Endothelial cell of umbilical vein (primary cell): ENCODE measurements at regions of chr10 and their contacts with region 1.

Region 1: DNA sequence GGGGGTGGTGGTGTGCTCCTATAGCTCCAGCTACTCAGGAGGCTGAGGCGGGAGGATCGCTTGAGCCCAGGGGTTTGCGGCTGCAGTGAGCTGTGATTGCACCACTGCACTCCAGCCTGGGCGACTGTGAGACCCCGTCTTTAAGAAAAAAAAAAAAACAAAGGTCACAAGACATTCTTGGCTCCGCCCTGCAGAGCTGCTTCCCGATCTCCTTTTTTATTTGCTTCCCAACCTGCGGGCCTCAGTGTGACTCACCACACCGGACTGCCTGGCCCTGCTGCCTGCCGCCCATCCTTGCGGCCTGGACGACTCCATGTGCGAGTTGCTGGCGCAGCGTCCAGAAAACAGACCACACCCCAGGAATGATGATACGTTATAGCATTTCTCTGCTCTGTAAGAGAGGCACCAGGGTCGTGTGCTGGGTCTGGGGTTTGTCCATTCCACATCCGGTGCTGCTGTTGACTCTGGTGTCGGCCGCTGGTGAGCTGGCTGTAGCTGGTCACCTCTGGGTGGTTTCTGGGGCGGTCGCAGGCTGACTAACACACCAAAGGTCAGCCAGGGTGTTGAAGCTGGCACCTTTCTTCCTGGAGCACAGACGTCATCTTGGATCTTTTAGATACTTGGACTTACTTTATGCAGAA is 123.6 kb downstream of the TCF7L2 start:
- DNase-seq: peak; percentile 92
- H3K4me3 ChIP-seq: no peak overlapping the region
- H3K27ac ChIP-seq: peak overlapping the region; percentile 76
- H3K4me1 ChIP-seq: peaks cover 35% of the 10 kb centered on the region
- H3K27me3 ChIP-seq: no peaks in the 10 kb centered on the region
- CTCF ChIP-seq: no peak
- POLR2A ChIP-seq: peak; percentile 78

Region 2: GRCh38 chr10:112981553-112981952 is 92.1 kb before region 1 on chr10:
- CTCF ChIA-PET with region 1: no interaction called
- POLR2A ChIA-PET with region 1: no interaction called
- dilution Hi-C with region 1: no loop called
- intact Hi-C with region 1: no loop called
- DNase-seq: no peak
- H3K4me3 ChIP-seq: no peak overlapping the region
- H3K27ac ChIP-seq: no peak overlapping the region
- H3K4me1 ChIP-seq: no peaks in the 10 kb centered on the region
- H3K27me3 ChIP-seq: no peaks in the 10 kb centered on the region
- CTCF ChIP-seq: no peak
- POLR2A ChIP-seq: no peak

Region 3: DNA sequence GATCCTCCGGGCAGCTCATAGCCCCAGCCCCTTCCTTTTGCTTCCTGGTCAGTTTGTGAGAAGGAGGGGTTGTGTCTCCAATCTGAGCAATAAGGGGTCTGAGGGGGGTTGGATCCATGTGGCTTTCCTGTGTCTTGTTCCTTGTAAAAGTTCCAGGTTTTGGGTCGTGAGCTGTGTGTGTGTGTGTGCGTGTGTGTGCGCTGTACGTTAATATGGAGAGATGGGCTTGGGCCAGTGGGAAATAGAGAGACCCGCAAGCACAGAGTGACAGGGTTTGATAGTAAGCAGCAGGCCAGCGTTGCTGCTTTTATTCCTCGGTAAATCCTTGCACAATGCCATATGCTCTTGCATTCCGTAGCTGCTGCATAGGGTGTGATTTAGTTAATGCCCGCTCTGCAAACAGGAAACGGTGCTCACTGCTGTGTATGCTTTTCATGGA is 15.1 kb before region 1 on chr10:
- CTCF ChIA-PET with region 1: interaction called, 20 read pairs
- POLR2A ChIA-PET with region 1: interaction called, 5 read pairs
- dilution Hi-C with region 1: no loop called
- intact Hi-C with region 1: loop called (anchors 1 kb)
- DNase-seq: peak; percentile 59
- H3K4me3 ChIP-seq: peak overlapping the region in 1 of 3 experiments; percentile 13
- H3K27ac ChIP-seq: peak overlapping the region; percentile 68
- H3K4me1 ChIP-seq: peaks cover 56% of the 10 kb centered on the region
- H3K27me3 ChIP-seq: no peaks in the 10 kb centered on the region
- CTCF ChIP-seq: no peak
- POLR2A ChIP-seq: no peak

Region 4: DNA sequence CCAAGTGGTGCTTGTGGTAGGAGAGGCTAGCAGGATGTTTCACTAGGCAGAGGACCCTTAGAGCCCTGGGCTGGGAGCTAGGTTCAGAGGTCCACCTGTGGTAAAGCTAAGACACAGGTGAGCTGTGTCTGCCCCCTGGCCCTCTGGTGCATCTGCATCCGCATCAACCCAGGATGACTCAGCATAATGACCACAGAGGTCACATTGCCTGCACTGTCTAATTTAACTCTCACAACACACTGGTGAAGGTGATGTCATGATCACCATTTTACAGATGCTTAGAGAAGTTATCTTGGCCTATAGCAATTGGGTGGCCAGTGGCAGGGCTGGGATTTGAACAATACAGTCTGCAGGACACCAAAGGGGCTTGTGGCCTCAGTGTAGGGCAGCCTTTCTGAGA is 512.3 kb after region 1 on chr10:
- CTCF ChIA-PET with region 1: no interaction called
- POLR2A ChIA-PET with region 1: no interaction called
- dilution Hi-C with region 1: no loop called
- intact Hi-C with region 1: no loop called
- DNase-seq: no peak
- H3K4me3 ChIP-seq: no peak overlapping the region
- H3K27ac ChIP-seq: no peak overlapping the region
- H3K4me1 ChIP-seq: no peaks in the 10 kb centered on the region
- H3K27me3 ChIP-seq: no peaks in the 10 kb centered on the region
- CTCF ChIP-seq: no peak
- POLR2A ChIP-seq: no peak